Spleen (tissue), 13 donors: ENCODE measurements at regions of chr18 and their contacts with region 1.

Region 1: DNA sequence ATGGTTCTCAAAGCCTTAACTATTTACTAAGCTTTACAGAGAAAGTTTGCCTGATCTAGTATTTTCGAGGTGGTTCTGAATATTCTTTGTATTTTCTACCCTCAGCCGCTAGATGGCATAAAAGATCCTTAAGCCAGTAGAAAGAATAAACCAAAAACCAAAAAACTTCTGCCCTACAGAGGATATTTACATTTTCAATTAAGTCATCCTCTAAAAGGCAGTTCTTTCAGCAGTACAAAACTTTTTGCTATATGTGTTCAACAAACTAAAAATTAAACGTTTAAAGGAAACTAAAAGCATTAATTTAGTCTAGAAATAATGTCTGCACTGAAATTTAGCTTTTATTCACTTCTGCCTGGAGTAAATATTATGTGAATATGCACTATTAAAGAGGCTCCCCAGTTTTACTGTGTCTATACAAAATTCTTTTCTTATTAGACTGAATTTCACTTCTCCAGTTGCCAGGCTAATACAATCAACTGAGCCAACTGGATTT is 297.5 kb downstream of the PIEZO2 start:
- DNase-seq: no peak
- H3K4me3 ChIP-seq: no peak overlapping the region
- H3K27ac ChIP-seq: no peak overlapping the region
- H3K4me1 ChIP-seq: peaks cover 0 to 9% (median 0%) of the 10 kb centered on the region in 6 donors
- H3K27me3 ChIP-seq: peaks cover 0 to 6% (median 0%) of the 10 kb centered on the region in 7 donors
- CTCF ChIP-seq: peak in 10 of 11 experiments; percentile 17 to 66 (median 54)
- POLR2A ChIP-seq: no peak

Region 2: GRCh38 chr18:10767658-10768057 is 84.2 kb before region 1 on chr18:
- intact Hi-C with region 1: no loop called
- DNase-seq: no peak
- H3K4me3 ChIP-seq: no peak overlapping the region
- H3K27ac ChIP-seq: no peak overlapping the region
- H3K4me1 ChIP-seq: no peaks in the 10 kb centered on the region
- H3K27me3 ChIP-seq: no peaks in the 10 kb centered on the region
- CTCF ChIP-seq: no peak
- POLR2A ChIP-seq: no peak

Region 3: GRCh38 chr18:11034884-11035283 is 183.0 kb after region 1 on chr18:
- intact Hi-C with region 1: loop called (anchors 5 kb)
- DNase-seq: no peak
- H3K4me3 ChIP-seq: no peak overlapping the region
- H3K27ac ChIP-seq: peak overlapping the region in 3 of 8 donors; percentile 25 to 60 (median 45)
- H3K4me1 ChIP-seq: peaks cover 0 to 10% (median 3%) of the 10 kb centered on the region in 6 donors
- H3K27me3 ChIP-seq: no peaks in the 10 kb centered on the region
- CTCF ChIP-seq: no peak
- POLR2A ChIP-seq: no peak

Region 4: GRCh38 chr18:11149441-11150270 is 297.8 kb after region 1 on chr18 and contains the start of gene PIEZO2:
- intact Hi-C with region 1: loop called (anchors 10 kb)
- DNase-seq: peak; percentile 81
- H3K4me3 ChIP-seq: peak within 1 kb of the TSS; percentile 10 to 66 (median 34)
- H3K27ac ChIP-seq: no peak within 1 kb of the TSS
- H3K4me1 ChIP-seq: peaks cover 3 to 26% (median 18%) of the 10 kb centered on the region in 6 donors
- H3K27me3 ChIP-seq: peaks cover 0 to 61% (median 34%) of the 10 kb centered on the region in 7 donors
- CTCF ChIP-seq: no peak
- POLR2A ChIP-seq: no peak
- total RNA-seq, gene PIEZO2: 4.6 to 13.0 (median 10.3) TPM

Region 5: GRCh38 chr18:11553098-11553940 is 701.4 kb after region 1 on chr18:
- intact Hi-C with region 1: loop called (anchors 10 kb)
- DNase-seq: no peak
- H3K4me3 ChIP-seq: no peak overlapping the region
- H3K27ac ChIP-seq: no peak overlapping the region
- H3K4me1 ChIP-seq: no peaks in the 10 kb centered on the region
- H3K27me3 ChIP-seq: peaks cover 0 to 5% (median 0%) of the 10 kb centered on the region in 7 donors
- CTCF ChIP-seq: peak in 10 of 11 experiments; percentile 53 to 89 (median 80)
- POLR2A ChIP-seq: no peak

Region 6: DNA sequence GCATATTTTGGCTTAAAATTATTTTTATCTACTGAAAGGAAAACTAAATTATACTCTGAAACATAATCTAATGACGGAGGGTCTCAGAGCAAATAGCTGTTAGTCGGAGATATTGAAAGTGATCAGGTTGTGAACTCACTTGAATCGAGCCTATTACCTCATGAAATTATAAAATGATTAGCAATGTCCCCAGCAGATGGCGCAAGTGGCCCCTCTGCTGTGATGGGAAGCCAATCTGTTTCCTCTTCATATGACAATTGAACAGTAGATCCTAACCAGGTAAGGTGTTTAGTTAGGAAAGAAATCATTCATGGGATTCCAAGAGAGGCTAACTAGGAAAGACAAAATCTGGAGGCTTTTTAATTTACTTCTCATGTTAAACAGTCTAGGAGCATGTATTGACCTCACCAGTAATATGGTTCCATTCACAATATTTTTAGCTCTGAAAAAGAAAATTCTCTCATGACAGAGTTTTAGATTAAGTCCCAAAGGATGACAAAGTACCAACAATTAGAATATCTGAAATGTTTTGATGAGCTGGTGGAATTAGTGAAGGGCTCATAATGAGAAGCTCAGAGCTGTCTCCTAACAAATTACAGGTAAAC is 1086.1 kb after region 1 on chr18:
- intact Hi-C with region 1: no loop called
- DNase-seq: peak; percentile 90
- H3K4me3 ChIP-seq: no peak overlapping the region
- H3K27ac ChIP-seq: peak overlapping the region in 2 of 8 donors; percentile 26 to 33
- H3K4me1 ChIP-seq: peaks cover 0 to 11% (median 5%) of the 10 kb centered on the region in 6 donors
- H3K27me3 ChIP-seq: no peaks in the 10 kb centered on the region
- CTCF ChIP-seq: peak; percentile 47 to 84 (median 69)
- POLR2A ChIP-seq: no peak